ENCODE measurements at regions of chr19 and their contacts with region 1.

Region 1: GRCh38 chr19:21197590-21198295 is 55.9 kb downstream of the ZNF431 start:
- DNase-seq: peak in 1 of 4 experiments; percentile 74
- ATAC-seq: peak; percentile 78
- H3K4me3 ChIP-seq: no peak overlapping the region
- H3K27ac ChIP-seq: peak overlapping the region; percentile 74
- H3K4me1 ChIP-seq: peaks cover 0 to 10% of the 10 kb centered on the region in 2 experiments; a peak in 2 of 5 replicates
- H3K27me3 ChIP-seq: no peaks in the 10 kb centered on the region
- CTCF ChIP-seq: no peak
- EP300 ChIP-seq: peak; percentile 74
- POLR2A ChIP-seq: no peak
- RAD21 ChIP-seq: peak in 1 of 2 experiments; percentile 39; a peak in 1 of 4 replicates

Region 2: GRCh38 chr19:21020298-21021227 is 177.2 kb before region 1 on chr19 and contains the start of gene ZNF430:
- CTCF ChIA-PET with region 1: no interaction called
- POLR2A ChIA-PET with region 1: no interaction called
- in situ Hi-C with region 1: no loop called
- intact Hi-C with region 1: loop called (anchors 5 kb)
- DNase-seq: peak; percentile 87 to 97 (median 92)
- ATAC-seq: peak; percentile 98
- H3K4me3 ChIP-seq: peak within 1 kb of the TSS; percentile 88
- H3K27ac ChIP-seq: peak within 1 kb of the TSS; percentile 88
- H3K4me1 ChIP-seq: peaks cover 2 to 13% of the 10 kb centered on the region in 2 experiments; a peak in 4 of 5 replicates
- H3K27me3 ChIP-seq: no peaks in the 10 kb centered on the region
- CTCF ChIP-seq: no peak
- EP300 ChIP-seq: no peak
- POLR2A ChIP-seq: peak; percentile 90
- RAD21 ChIP-seq: no peak
- polyA plus RNA-seq, gene ZNF430: 4.7 to 5.3 TPM

Region 3: DNA sequence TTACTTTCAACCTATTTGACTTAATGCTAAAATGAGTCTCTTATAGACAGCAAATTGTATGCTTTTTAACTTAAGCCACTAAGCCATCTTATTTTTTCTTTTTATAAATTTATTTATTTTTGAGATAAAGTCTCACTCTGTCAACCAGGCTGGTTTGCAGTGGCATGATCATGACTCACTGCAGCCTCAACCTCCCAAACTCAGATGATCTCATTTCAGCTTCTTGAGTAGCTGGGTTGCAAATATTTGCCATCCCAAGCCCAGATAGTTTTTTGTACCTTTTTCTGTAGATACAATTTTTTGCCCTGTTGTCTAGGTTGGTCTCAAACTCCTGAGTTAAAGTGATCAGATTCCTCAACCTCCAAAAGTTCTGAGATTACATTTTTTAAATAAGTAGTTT is 88.6 kb before region 1 on chr19:
- CTCF ChIA-PET with region 1: no interaction called
- POLR2A ChIA-PET with region 1: no interaction called
- in situ Hi-C with region 1: no loop called
- intact Hi-C with region 1: no loop called
- DNase-seq: no peak
- ATAC-seq: no peak
- H3K4me3 ChIP-seq: no peak overlapping the region
- H3K27ac ChIP-seq: no peak overlapping the region
- H3K4me1 ChIP-seq: no peaks in the 10 kb centered on the region
- H3K27me3 ChIP-seq: no peaks in the 10 kb centered on the region
- CTCF ChIP-seq: no peak
- EP300 ChIP-seq: no peak
- POLR2A ChIP-seq: no peak
- RAD21 ChIP-seq: no peak

Measured in K562 (cell line).